Activated T-helper 2 cell treated with anti-CD3 and anti-CD28 coated beads, Interferon-gamma antibody, Interleukin-2, Interleukin-4, amounts not matched to agents 10 μg/mL and 5 μg/mL and 100 μg/mL, durations not matched to agents 14 hours and 24 hours and 36 hours (primary cell): ENCODE measurements at regions of chr1 and their contacts with region 1.

Region 1: GRCh38 chr1:173476664-173477285 is 360 bp upstream of the PRDX6 start:
- DNase-seq: peak; percentile 74
- H3K4me3 Mint-ChIP-seq: peak overlapping the region; percentile 92
- H3K27ac Mint-ChIP-seq: peak overlapping the region; percentile 94
- H3K4me1 Mint-ChIP-seq: peaks cover 53% of the 10 kb centered on the region
- H3K27me3 Mint-ChIP-seq: no peaks in the 10 kb centered on the region

Region 2: DNA sequence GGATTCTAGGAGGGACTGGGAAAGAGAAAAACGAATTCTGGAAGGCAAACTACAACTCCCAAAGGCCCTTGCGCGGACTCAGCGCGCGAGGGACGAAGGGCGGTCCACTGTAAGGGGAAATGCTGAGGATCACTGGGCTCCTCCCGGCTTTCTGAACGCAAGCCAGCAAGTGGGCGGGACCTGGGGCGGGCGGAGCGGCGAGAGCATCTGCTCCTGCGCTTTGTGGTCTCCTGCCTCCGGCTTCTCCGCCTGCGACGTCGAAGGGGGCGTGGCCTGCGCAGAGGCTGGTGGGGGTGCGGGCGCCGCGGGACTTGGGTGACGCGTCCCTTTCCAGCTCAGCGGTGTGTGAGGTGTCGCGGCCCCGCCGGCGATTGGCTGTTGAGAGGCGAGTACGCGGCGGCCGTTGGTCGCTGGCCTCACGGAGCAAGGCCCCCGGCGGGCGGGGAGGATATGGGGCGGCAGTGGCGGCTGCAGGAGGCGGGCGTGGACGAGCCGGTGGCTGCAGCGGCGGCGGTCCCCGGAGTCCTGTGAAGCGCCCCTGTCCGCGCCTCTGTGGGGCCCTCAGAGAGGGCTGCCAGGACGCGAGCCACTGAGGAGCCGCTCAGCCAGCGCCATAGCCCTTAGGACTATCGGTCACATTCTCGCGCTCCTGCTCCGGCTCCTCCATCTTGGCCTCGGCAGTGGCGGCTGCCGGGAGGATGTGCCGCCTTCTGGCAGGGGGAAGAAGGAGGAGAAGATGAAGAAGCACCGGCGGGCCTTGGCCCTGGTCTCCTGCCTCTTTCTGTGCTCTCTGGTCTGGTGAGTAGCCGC is 943.9 kb before region 1 on chr1 and contains the start of gene SUCO:
- intact Hi-C with region 1: loop called (anchors 2 kb)
- DNase-seq: peak; percentile 100
- H3K4me3 Mint-ChIP-seq: peak within 1 kb of the TSS; percentile 95
- H3K27ac Mint-ChIP-seq: peak within 1 kb of the TSS; percentile 99
- H3K4me1 Mint-ChIP-seq: peaks cover 38% of the 10 kb centered on the region
- H3K27me3 Mint-ChIP-seq: peaks cover 9% of the 10 kb centered on the region
- total RNA-seq, gene SUCO: 28.2 and 33.3 TPM in 2 replicates

Region 3: DNA sequence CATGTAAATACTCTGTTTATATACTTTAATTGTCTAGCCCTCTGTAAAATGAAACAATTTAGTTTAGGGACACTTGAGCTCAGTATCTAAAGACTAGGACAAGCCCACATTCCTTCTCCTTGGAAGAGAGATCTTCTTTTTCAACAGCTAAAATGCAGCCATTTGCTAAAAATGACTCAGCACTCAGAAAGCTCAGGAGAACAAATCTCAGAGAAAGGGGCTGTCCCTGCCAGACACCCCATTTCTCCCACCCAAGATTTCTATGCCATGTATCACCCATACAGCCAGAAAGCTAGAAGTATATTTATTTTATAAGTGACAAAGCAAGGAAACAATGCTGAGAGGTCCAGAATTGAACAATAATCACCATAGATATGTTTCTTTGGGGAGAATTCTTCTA is 22.8 kb before region 1 on chr1:
- intact Hi-C with region 1: loop called (anchors 2 kb)
- DNase-seq: no peak
- H3K4me3 Mint-ChIP-seq: no peak overlapping the region
- H3K27ac Mint-ChIP-seq: no peak overlapping the region
- H3K4me1 Mint-ChIP-seq: peaks cover 17% of the 10 kb centered on the region
- H3K27me3 Mint-ChIP-seq: no peaks in the 10 kb centered on the region

Region 4: DNA sequence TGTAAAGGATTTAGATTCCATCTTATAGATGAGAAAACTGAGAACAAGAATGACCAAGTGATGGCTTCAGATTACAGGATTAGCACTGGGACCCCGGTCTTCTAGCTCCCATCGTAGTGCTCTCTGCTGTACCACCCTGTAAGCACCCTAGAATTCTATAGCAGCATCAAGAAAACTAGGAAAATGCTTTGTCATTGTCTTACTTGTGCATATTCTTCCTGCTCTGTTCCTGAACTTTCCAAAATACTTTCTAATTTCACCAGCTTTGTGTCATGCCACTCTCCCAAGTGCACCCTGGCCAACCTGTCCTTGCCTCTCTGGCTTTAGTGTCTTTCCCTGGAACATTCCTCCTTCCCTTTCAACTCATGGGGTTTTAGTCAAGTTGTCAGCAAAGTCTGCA is 232.0 kb after region 1 on chr1:
- intact Hi-C with region 1: no loop called
- DNase-seq: no peak
- H3K4me3 Mint-ChIP-seq: no peak overlapping the region
- H3K27ac Mint-ChIP-seq: no peak overlapping the region
- H3K4me1 Mint-ChIP-seq: peaks cover 1% of the 10 kb centered on the region
- H3K27me3 Mint-ChIP-seq: peaks cover 29% of the 10 kb centered on the region

Region 5: DNA sequence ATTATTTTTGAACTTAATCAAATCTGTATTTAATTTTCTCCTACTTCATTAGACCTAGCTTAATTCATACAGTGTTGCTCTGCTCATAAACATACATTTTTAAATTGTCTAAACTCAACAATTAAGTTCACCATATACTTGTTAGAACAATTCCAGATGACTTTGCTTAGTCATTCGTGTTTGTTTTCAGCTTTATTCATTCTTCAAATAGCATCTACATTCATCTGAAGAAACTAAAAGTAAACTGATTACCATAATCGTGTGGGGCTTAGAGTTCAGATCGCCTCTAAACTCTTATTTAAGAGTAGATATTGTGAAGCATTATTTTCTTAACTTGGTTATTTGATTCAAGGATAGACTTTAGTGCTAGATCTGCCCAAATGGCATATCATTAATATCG is 272.4 kb after region 1 on chr1:
- intact Hi-C with region 1: no loop called
- DNase-seq: no peak
- H3K4me3 Mint-ChIP-seq: no peak overlapping the region
- H3K27ac Mint-ChIP-seq: no peak overlapping the region
- H3K4me1 Mint-ChIP-seq: peaks cover 1% of the 10 kb centered on the region
- H3K27me3 Mint-ChIP-seq: no peaks in the 10 kb centered on the region

Region 6: GRCh38 chr1:173824331-173825081 is 347.7 kb after region 1 on chr1 and contains the starts of genes CENPL and DARS2:
- intact Hi-C with region 1: loop called (anchors 2 kb)
- DNase-seq: peak; percentile 91
- H3K4me3 Mint-ChIP-seq: peak within 1 kb of the TSS; percentile 98
- H3K27ac Mint-ChIP-seq: peak within 1 kb of the TSS; percentile 99
- H3K4me1 Mint-ChIP-seq: peaks cover 36% of the 10 kb centered on the region
- H3K27me3 Mint-ChIP-seq: no peaks in the 10 kb centered on the region
- total RNA-seq, gene CENPL: 26.1 and 26.2 TPM in 2 replicates
- total RNA-seq, gene DARS2: 49.7 and 49.9 TPM in 2 replicates

Region 7: GRCh38 chr1:174022080-174022975 is 545.6 kb after region 1 on chr1 and contains the start of gene RC3H1:
- intact Hi-C with region 1: loop called (anchors 5 kb)
- DNase-seq: peak; percentile 85
- H3K4me3 Mint-ChIP-seq: peak within 1 kb of the TSS; percentile 99
- H3K27ac Mint-ChIP-seq: peak within 1 kb of the TSS; percentile 90
- H3K4me1 Mint-ChIP-seq: peaks cover 35% of the 10 kb centered on the region
- H3K27me3 Mint-ChIP-seq: peaks cover 2% of the 10 kb centered on the region
- total RNA-seq, gene RC3H1: 30.4 and 33.5 TPM in 2 replicates

Region 8: GRCh38 chr1:175023043-175023921 is 1546.5 kb after region 1 on chr1 and contains the start of gene MRPS14:
- intact Hi-C with region 1: loop called (anchors 10 kb)
- DNase-seq: peak; percentile 96
- H3K4me3 Mint-ChIP-seq: peak within 1 kb of the TSS; percentile 99
- H3K27ac Mint-ChIP-seq: peak within 1 kb of the TSS; percentile 92
- H3K4me1 Mint-ChIP-seq: peaks cover 29% of the 10 kb centered on the region
- H3K27me3 Mint-ChIP-seq: no peaks in the 10 kb centered on the region
- total RNA-seq, gene MRPS14: 31.5 and 32.9 TPM in 2 replicates